ENCODE measurements at regions of chr7 and their contacts with region 1.

Region 1: GRCh38 chr7:127755521-127755920 is 103.5 kb downstream of the SND1 start:
- DNase-seq: peak; percentile 52
- H3K4me3 ChIP-seq: no peak overlapping the region
- H3K27ac ChIP-seq: peak overlapping the region in 1 of 2 experiments; percentile 85; a peak in 2 of 4 replicates
- H3K4me1 ChIP-seq: peaks cover 7 to 25% of the 10 kb centered on the region in 2 experiments; a peak in 3 of 4 replicates
- H3K27me3 ChIP-seq: no peaks in the 10 kb centered on the region
- CTCF ChIP-seq: no peak
- EP300 ChIP-seq: peak in 1 of 2 experiments; percentile 34; a peak in 1 of 4 replicates
- RAD21 ChIP-seq: peak; percentile 12; the same call in 1 of the 2 replicates

Region 2: DNA sequence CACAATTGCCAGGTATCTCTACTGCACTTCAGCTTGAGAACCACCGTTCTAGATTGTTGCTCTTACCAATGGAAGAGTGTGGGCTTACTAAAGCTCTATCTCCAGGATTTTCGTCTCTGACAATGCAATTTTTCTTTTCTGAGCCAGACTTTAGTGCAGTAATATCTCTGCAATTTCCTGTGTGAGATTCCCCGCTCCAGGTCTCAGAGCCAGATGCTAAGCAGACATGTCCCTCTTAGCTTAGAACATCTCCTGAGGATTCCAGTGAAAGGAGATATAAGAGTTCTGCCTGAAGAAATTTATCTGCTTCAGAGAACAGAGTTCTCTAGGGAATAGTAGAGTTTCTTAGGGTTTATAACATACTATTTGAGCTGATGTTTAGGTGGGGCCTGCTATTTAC is 21.5 kb before region 1 on chr7:
- CTCF ChIA-PET with region 1: interaction called, 13 read pairs
- POLR2A ChIA-PET with region 1: no interaction called
- DNase-seq: no peak
- H3K4me3 ChIP-seq: no peak overlapping the region
- H3K27ac ChIP-seq: peak overlapping the region in 1 of 2 experiments; percentile 76; a peak in 2 of 4 replicates
- H3K4me1 ChIP-seq: peaks cover 5 to 37% of the 10 kb centered on the region in 2 experiments; a peak in 3 of 4 replicates
- H3K27me3 ChIP-seq: no peaks in the 10 kb centered on the region
- CTCF ChIP-seq: no peak
- EP300 ChIP-seq: no peak
- RAD21 ChIP-seq: no peak

Region 3: DNA sequence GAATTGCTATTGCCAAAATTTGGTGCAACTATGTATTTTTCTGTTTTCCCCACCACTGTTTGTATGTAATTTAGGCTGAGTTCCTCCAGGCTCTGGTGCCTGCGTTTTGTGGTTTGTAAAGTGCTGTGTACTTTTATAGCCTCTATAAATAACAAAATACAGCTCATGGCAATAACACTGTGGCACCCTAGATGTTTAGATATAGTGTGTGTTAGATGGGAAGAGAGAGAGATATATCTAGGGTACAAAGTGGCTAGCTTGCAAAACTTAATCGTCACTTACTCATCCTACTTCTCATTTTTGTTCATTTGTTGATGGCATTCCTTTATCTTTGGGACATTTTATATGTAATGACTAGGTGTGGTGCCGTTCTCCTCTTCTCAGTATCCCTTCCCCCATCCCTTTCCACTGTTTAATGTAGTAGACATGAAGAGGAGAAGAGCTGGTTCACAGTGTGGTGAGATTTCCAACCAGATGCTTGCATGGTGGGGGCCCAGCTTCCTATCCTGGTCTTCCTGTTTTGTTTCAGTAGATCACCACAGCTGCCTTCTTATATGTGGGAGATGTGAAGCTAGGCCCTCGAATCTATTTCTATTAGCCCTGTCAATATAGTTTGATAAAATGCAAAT is 11.4 kb after region 1 on chr7:
- CTCF ChIA-PET with region 1: interaction called, 12 read pairs
- POLR2A ChIA-PET with region 1: interaction called, 3 read pairs
- DNase-seq: no peak
- H3K4me3 ChIP-seq: no peak overlapping the region
- H3K27ac ChIP-seq: no peak overlapping the region
- H3K4me1 ChIP-seq: peaks cover 34 to 37% of the 10 kb centered on the region in 2 experiments
- H3K27me3 ChIP-seq: no peaks in the 10 kb centered on the region
- CTCF ChIP-seq: no peak
- EP300 ChIP-seq: no peak
- RAD21 ChIP-seq: no peak

Measured in SK-N-SH (cell line).